Psoas muscle (tissue), 8 donors: ENCODE measurements at regions of chr5 and their contacts with region 1.

Region 1: GRCh38 chr5:101424530-101425175 is 521.6 kb upstream of the ST8SIA4 start:
- DNase-seq: no peak
- ATAC-seq: no peak
- H3K4me3 ChIP-seq: no peak overlapping the region
- H3K27ac ChIP-seq: no peak overlapping the region
- H3K4me1 ChIP-seq: no peaks in the 10 kb centered on the region
- H3K27me3 ChIP-seq: no peaks in the 10 kb centered on the region
- CTCF ChIP-seq: no peak

Region 2: GRCh38 chr5:101390151-101390908 is 34.3 kb before region 1 on chr5:
- intact Hi-C with region 1: no loop called
- DNase-seq: no peak
- ATAC-seq: no peak
- H3K4me3 ChIP-seq: no peak overlapping the region
- H3K27ac ChIP-seq: no peak overlapping the region
- H3K4me1 ChIP-seq: no peaks in the 10 kb centered on the region
- H3K27me3 ChIP-seq: no peaks in the 10 kb centered on the region
- CTCF ChIP-seq: peak; percentile 41

Region 3: GRCh38 chr5:101461455-101461854 is 36.8 kb after region 1 on chr5:
- intact Hi-C with region 1: loop called in 1 of 2 experiments (anchors 2 kb)
- DNase-seq: no peak
- ATAC-seq: no peak
- H3K4me3 ChIP-seq: no peak overlapping the region
- H3K27ac ChIP-seq: no peak overlapping the region
- H3K4me1 ChIP-seq: no peaks in the 10 kb centered on the region
- H3K27me3 ChIP-seq: no peaks in the 10 kb centered on the region
- CTCF ChIP-seq: no peak